ENCODE measurements at regions of chr20 and their contacts with region 1.

Region 1: DNA sequence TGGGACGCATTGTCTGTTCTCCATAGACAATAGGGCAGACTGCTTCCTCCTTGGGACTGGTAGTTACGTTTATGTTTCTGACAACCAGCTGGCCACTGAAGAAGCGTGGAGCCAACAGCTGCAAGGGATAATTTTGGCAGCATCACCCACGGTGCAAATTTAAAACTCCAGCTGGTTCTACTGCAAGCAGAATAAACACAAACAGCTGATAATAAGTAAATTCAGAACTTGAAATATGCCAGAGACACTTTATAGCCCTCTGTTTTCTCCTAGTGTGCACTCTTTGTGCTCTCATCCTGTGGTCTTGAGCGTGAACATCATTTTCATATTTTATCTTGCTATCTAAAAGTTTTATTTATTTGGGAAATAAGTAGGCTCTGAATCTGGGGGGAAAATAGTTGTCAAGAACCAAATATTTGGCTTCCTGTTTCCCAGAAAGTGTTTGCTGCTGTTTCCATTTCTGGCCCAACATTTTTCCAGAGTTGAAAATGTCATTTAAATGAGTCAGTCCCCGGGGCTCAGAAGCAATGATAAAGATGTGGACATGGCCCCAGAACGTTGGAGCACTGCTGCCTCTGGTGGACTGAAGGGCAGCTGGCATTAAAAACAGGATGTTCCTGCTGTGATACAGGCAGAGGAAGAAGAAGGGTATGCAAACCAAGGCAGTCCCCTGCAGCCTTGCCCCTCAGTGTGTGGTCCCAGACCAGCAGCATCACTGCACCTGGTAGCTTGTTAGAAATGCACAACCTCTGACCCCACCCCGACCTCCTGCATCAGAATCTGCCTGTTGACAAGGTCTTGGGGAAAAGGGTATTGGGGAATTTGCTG is 12.5 kb upstream of the THBD start:
- DNase-seq: peak; percentile 49 to 53
- H3K4me3 ChIP-seq: no peak overlapping the region
- H3K4me3 Mint-ChIP-seq: no peak overlapping the region
- H3K27ac Mint-ChIP-seq: peak overlapping the region; percentile 39
- H3K4me1 ChIP-seq: peaks cover 58% of the 10 kb centered on the region
- H3K4me1 Mint-ChIP-seq: peaks cover 40% of the 10 kb centered on the region
- H3K27me3 ChIP-seq: no peaks in the 10 kb centered on the region
- H3K27me3 Mint-ChIP-seq: no peaks in the 10 kb centered on the region
- CTCF ChIP-seq: peak; percentile 35 to 39

Region 2: GRCh38 chr20:22815603-22816315 is 246.2 kb before region 1 on chr20:
- CTCF ChIA-PET with region 1: no interaction called
- POLR2A ChIA-PET with region 1: no interaction called
- intact Hi-C with region 1: loop called (anchors 10 kb)
- DNase-seq: no peak
- H3K4me3 ChIP-seq: no peak overlapping the region
- H3K4me3 Mint-ChIP-seq: no peak overlapping the region
- H3K27ac Mint-ChIP-seq: no peak overlapping the region
- H3K4me1 ChIP-seq: no peaks in the 10 kb centered on the region
- H3K4me1 Mint-ChIP-seq: peaks cover 4% of the 10 kb centered on the region
- H3K27me3 ChIP-seq: no peaks in the 10 kb centered on the region
- H3K27me3 Mint-ChIP-seq: no peaks in the 10 kb centered on the region
- CTCF ChIP-seq: peak; percentile 17 to 33

Region 3: GRCh38 chr20:23021951-23022350 is 40.0 kb before region 1 on chr20:
- CTCF ChIA-PET with region 1: no interaction called
- POLR2A ChIA-PET with region 1: no interaction called
- intact Hi-C with region 1: loop called (anchors 1 kb)
- DNase-seq: no peak
- H3K4me3 ChIP-seq: no peak overlapping the region
- H3K4me3 Mint-ChIP-seq: no peak overlapping the region
- H3K27ac Mint-ChIP-seq: peak overlapping the region; percentile 84
- H3K4me1 ChIP-seq: peaks cover 73% of the 10 kb centered on the region
- H3K4me1 Mint-ChIP-seq: peaks cover 54% of the 10 kb centered on the region
- H3K27me3 ChIP-seq: no peaks in the 10 kb centered on the region
- H3K27me3 Mint-ChIP-seq: no peaks in the 10 kb centered on the region
- CTCF ChIP-seq: no peak